ENCODE measurements at regions of chr3 and their contacts with region 1.

Region 1: GRCh38 chr3:119469381-119470189 is 822 bp downstream of the POGLUT1 start:
- DNase-seq: no peak
- H3K4me3 Mint-ChIP-seq: peak overlapping the region; percentile 95
- H3K27ac Mint-ChIP-seq: peak overlapping the region; percentile 93
- H3K4me1 Mint-ChIP-seq: peaks cover 39% of the 10 kb centered on the region
- H3K27me3 Mint-ChIP-seq: no peaks in the 10 kb centered on the region

Region 2: GRCh38 chr3:119508172-119508845 is 38.7 kb after region 1 on chr3:
- intact Hi-C with region 1: loop called (anchors 2 kb)
- DNase-seq: peak; percentile 31
- H3K4me3 Mint-ChIP-seq: peak overlapping the region; percentile 5
- H3K27ac Mint-ChIP-seq: peak overlapping the region; percentile 89
- H3K4me1 Mint-ChIP-seq: peaks cover 39% of the 10 kb centered on the region
- H3K27me3 Mint-ChIP-seq: no peaks in the 10 kb centered on the region